ENCODE measurements at regions of chr13 and their contacts with region 1.

Region 1: GRCh38 chr13:52128714-52129700 is at the start of gene NEK5:
- DNase-seq: peak; percentile 59
- ATAC-seq: peak; percentile 84
- H3K4me3 Mint-ChIP-seq: peak within 1 kb of the TSS; percentile 78
- H3K27ac Mint-ChIP-seq: no peak within 1 kb of the TSS
- H3K4me1 Mint-ChIP-seq: peaks cover 15% of the 10 kb centered on the region
- H3K27me3 Mint-ChIP-seq: peaks cover 17% of the 10 kb centered on the region
- CTCF ChIP-seq: peak; percentile 69
- total RNA-seq, gene NEK5: 0.11 to 0.16 TPM

Region 2: DNA sequence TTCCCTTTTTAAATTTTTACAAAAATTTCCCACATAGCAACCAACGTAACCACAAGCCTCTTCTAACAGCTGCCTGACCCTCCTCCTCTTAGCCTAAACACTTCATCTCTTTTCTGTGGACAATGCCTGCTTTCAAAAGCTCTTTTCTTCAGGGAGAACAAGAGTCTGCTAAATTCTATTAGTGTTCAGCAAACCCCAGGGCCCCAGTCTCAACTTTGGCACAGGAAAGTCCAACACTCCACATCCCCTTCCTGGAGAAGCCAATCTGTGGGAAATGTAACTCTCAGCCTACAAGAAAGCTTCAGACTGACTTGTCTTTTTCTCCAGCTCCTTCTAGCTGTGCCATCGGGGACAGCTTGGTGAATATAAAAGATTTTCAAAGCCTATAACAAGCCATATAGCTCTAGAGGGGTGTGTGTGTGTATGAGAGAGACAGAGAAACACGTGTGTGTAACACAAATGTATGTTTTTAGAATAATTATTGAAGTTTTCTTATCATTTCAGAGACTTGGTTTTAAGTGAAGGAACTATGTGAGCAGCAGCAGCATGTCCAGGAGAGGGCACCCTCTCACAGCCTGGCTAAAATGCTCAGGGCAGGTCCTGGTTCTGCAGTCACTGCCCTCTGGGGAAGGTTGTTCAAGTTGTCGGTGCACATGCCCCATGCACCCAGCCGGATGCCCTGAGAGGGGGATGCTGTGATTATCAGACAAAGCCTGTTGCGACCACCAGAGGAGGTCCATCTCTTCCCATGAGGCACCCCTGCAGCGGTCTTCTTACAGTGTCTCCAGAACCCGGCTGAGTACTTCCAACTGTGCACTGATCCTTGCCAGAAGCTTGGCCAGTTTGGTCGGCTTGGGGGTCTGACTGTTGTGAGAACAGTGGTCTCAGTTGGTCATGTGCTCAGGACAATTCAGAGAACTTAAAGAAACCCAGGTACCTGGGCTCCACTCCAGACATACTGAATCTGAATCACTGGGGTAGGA is 232.8 kb before region 1 on chr13:
- CTCF ChIA-PET with region 1: interaction called, 15 read pairs
- POLR2A ChIA-PET with region 1: no interaction called
- intact Hi-C with region 1: loop called (anchors 5 kb)
- DNase-seq: peak; percentile 64
- ATAC-seq: peak; percentile 67
- H3K4me3 Mint-ChIP-seq: no peak overlapping the region
- H3K27ac Mint-ChIP-seq: no peak overlapping the region
- H3K4me1 Mint-ChIP-seq: no peaks in the 10 kb centered on the region
- H3K27me3 Mint-ChIP-seq: no peaks in the 10 kb centered on the region
- CTCF ChIP-seq: peak; percentile 59

Region 3: DNA sequence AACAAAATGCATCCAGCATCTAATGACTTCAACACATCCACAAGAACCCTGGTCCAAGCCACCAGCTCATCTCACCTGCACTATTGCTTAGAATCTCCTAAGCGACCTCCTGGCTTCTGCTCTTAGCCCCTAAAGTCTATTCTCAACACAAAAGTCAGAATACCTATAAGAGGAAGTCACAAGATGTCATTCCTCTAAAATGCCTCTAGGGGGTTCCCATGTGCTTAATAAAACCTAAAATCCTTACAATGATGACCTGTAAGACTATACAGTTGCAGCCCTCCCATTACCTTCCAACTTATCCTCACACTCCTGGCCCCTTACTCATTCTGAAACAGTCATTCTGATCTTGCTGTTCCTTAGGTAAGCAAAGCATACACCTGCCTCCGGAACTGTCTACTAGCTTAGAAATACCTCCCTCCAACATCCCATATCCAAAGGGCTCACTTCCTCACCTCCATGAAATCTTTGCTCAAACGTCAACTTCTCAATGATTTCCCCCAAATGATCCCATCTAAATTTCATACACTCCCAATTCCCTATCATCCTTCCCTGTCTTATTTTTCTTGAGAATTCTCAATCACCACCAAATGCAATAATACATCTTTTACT is 127.8 kb before region 1 on chr13:
- CTCF ChIA-PET with region 1: interaction called, 62 read pairs
- POLR2A ChIA-PET with region 1: interaction called, 5 read pairs
- intact Hi-C with region 1: loop called (anchors 5 kb)
- DNase-seq: no peak
- ATAC-seq: peak; percentile 97
- H3K4me3 Mint-ChIP-seq: no peak overlapping the region
- H3K27ac Mint-ChIP-seq: no peak overlapping the region
- H3K4me1 Mint-ChIP-seq: no peaks in the 10 kb centered on the region
- H3K27me3 Mint-ChIP-seq: peaks cover 9% of the 10 kb centered on the region
- CTCF ChIP-seq: peak; percentile 81

Region 4: GRCh38 chr13:52006523-52007245 is 122.3 kb before region 1 on chr13:
- CTCF ChIA-PET with region 1: interaction called, 62 read pairs
- POLR2A ChIA-PET with region 1: no interaction called
- intact Hi-C with region 1: loop called (anchors 5 kb)
- DNase-seq: no peak
- ATAC-seq: no peak
- H3K4me3 Mint-ChIP-seq: no peak overlapping the region
- H3K27ac Mint-ChIP-seq: no peak overlapping the region
- H3K4me1 Mint-ChIP-seq: peaks cover 6% of the 10 kb centered on the region
- H3K27me3 Mint-ChIP-seq: peaks cover 16% of the 10 kb centered on the region
- CTCF ChIP-seq: no peak

Region 5: GRCh38 chr13:52011632-52012511 is 117.1 kb before region 1 on chr13 and contains the start of gene ALG11:
- CTCF ChIA-PET with region 1: interaction called, 19 read pairs
- POLR2A ChIA-PET with region 1: no interaction called
- intact Hi-C with region 1: no loop called
- DNase-seq: peak; percentile 100
- ATAC-seq: peak; percentile 99
- H3K4me3 Mint-ChIP-seq: peak within 1 kb of the TSS; percentile 99
- H3K27ac Mint-ChIP-seq: peak within 1 kb of the TSS; percentile 94
- H3K4me1 Mint-ChIP-seq: peaks cover 14% of the 10 kb centered on the region
- H3K27me3 Mint-ChIP-seq: peaks cover 16% of the 10 kb centered on the region
- CTCF ChIP-seq: no peak
- total RNA-seq, gene ALG11: 21.0 to 22.6 TPM

Region 6: DNA sequence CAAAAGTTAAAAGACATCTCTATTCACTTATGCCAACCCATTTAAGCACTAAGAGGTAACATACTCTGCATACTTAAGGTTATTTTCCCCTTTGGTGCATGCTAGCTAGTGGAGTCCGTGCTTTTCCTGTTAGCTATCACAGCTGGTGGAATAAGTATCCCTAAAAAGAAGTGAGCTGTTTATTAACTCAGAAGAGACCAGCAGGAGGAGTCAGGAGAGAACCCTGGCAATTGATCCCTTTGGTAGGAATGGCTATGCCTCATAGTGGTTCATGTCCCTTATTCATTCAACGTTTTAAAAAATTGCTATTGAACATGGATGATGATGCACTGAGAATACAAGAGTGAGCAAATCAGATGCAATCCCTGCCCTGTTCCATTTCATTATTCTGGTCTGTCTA is 12.3 kb after region 1 on chr13:
- CTCF ChIA-PET with region 1: interaction called, 13 read pairs
- POLR2A ChIA-PET with region 1: no interaction called
- intact Hi-C with region 1: no loop called
- DNase-seq: no peak
- ATAC-seq: no peak
- H3K4me3 Mint-ChIP-seq: no peak overlapping the region
- H3K27ac Mint-ChIP-seq: no peak overlapping the region
- H3K4me1 Mint-ChIP-seq: no peaks in the 10 kb centered on the region
- H3K27me3 Mint-ChIP-seq: no peaks in the 10 kb centered on the region
- CTCF ChIP-seq: no peak

Region 7: DNA sequence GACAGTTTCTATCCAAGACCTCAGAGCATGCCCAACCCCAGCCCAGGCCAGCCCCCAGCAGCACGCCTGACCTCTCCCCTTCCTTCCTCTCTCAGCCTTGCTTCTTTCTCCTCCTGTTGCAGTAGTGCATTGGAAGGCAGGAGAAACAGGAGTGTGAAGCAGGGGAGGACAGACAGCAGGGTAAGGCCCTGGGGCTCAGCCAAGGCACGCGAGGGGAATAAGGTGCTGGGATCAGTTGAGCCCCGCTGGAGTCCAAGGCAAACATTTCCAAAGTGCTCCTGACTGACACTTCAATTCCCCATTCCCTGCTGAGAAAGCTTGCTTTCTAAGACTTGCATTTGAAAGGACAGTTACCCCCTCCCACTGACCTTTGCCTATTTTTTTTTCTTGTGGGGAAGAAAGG is 826.5 kb after region 1 on chr13:
- CTCF ChIA-PET with region 1: no interaction called
- POLR2A ChIA-PET with region 1: no interaction called
- intact Hi-C with region 1: no loop called
- DNase-seq: no peak
- ATAC-seq: no peak
- H3K4me3 Mint-ChIP-seq: no peak overlapping the region
- H3K27ac Mint-ChIP-seq: no peak overlapping the region
- H3K4me1 Mint-ChIP-seq: no peaks in the 10 kb centered on the region
- H3K27me3 Mint-ChIP-seq: peaks cover 4% of the 10 kb centered on the region
- CTCF ChIP-seq: no peak